ENCODE measurements at regions of chr9 and their contacts with region 1.

Region 1: GRCh38 chr9:96566498-96567207 is 53.0 kb downstream of the CDC14B start:
- DNase-seq: peak; percentile 71
- ATAC-seq: peak; percentile 89
- H3K4me3 Mint-ChIP-seq: peak overlapping the region; percentile 86
- H3K27ac Mint-ChIP-seq: peak overlapping the region; percentile 81
- H3K4me1 Mint-ChIP-seq: peaks cover 17% of the 10 kb centered on the region
- H3K27me3 Mint-ChIP-seq: peaks cover 3% of the 10 kb centered on the region
- CTCF ChIP-seq: no peak

Region 2: GRCh38 chr9:96484521-96484931 is 82.1 kb before region 1 on chr9:
- CTCF ChIA-PET with region 1: no interaction called
- POLR2A ChIA-PET with region 1: no interaction called
- intact Hi-C with region 1: loop called (anchors 5 kb)
- DNase-seq: no peak
- ATAC-seq: peak; percentile 88
- H3K4me3 Mint-ChIP-seq: no peak overlapping the region
- H3K27ac Mint-ChIP-seq: peak overlapping the region; percentile 75
- H3K4me1 Mint-ChIP-seq: peaks cover 20% of the 10 kb centered on the region
- H3K27me3 Mint-ChIP-seq: no peaks in the 10 kb centered on the region
- CTCF ChIP-seq: no peak

Region 3: GRCh38 chr9:96500696-96501632 is 65.7 kb before region 1 on chr9:
- CTCF ChIA-PET with region 1: no interaction called
- POLR2A ChIA-PET with region 1: no interaction called
- intact Hi-C with region 1: no loop called
- DNase-seq: no peak
- ATAC-seq: no peak
- H3K4me3 Mint-ChIP-seq: no peak overlapping the region
- H3K27ac Mint-ChIP-seq: no peak overlapping the region
- H3K4me1 Mint-ChIP-seq: no peaks in the 10 kb centered on the region
- H3K27me3 Mint-ChIP-seq: no peaks in the 10 kb centered on the region
- CTCF ChIP-seq: no peak

Region 4: DNA sequence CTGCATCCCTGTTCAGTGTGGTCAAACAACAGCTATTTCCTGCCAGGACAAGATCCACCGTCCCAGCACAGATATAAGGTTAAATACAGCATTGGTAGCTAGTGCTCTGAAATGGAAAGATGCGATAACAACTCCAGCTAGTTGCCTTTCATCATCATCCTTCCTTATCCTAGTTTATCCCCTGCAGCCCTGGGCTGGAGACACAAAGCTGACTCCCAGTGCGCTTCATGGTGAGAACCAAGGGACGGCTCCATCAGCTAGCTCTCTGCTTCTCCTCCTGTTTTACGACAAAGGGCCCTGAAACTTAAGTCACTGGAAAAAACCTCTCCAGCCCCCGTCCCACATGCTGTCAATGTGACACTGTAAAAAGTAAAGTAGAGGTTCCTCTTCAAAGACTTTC is 15.1 kb after region 1 on chr9:
- CTCF ChIA-PET with region 1: no interaction called
- POLR2A ChIA-PET with region 1: no interaction called
- intact Hi-C with region 1: no loop called
- DNase-seq: no peak
- ATAC-seq: no peak
- H3K4me3 Mint-ChIP-seq: no peak overlapping the region
- H3K27ac Mint-ChIP-seq: no peak overlapping the region
- H3K4me1 Mint-ChIP-seq: no peaks in the 10 kb centered on the region
- H3K27me3 Mint-ChIP-seq: peaks cover 3% of the 10 kb centered on the region
- CTCF ChIP-seq: no peak

Measured in activated B cell treated with CpG ODN at 0.5 μM for 24 hours (primary cell).